Activated CD4-positive, alpha-beta memory T cell treated with anti-CD3 and anti-CD28 coated beads for 36 hours (primary cell): ENCODE measurements at regions of chr7 and their contacts with region 1.

Region 1: DNA sequence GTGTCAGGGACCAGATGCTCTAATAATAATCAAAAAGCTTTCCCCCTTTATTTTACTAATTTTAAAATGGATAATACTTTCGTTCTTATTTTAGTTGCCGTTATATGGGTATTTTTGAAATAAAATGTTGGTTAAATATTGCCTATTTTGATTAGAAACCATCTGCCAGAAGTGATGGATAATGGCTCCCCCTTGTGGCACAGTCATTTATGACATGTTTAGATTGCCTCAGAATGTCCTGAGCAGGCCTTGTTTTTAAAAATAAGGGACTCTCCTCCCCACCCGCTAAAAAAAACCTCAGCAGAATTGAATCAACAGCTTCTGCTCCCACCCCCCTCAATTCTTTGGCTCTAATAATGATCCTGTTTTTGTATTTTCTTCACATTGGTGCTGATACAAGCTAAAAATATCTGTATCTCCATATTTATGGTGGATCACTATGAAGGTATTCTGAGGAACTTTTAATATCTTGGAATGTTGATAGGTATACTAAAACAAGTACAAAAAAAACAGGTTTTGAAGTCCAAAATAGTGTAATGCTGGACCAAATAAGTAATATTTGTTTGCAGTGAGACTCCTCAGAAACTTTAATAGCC is 38.8 kb downstream of the TMEM60 start:
- DNase-seq: peak; percentile 65
- H3K4me3 Mint-ChIP-seq: no peak overlapping the region
- H3K27ac Mint-ChIP-seq: no peak overlapping the region
- H3K4me1 Mint-ChIP-seq: peaks cover 21% of the 10 kb centered on the region
- H3K27me3 Mint-ChIP-seq: no peaks in the 10 kb centered on the region

Region 2: GRCh38 chr7:77651573-77652162 is 107.7 kb before region 1 on chr7:
- CTCF ChIA-PET with region 1: interaction called, 156 read pairs
- POLR2A ChIA-PET with region 1: no interaction called
- intact Hi-C with region 1: no loop called
- DNase-seq: no peak
- H3K4me3 Mint-ChIP-seq: no peak overlapping the region
- H3K27ac Mint-ChIP-seq: no peak overlapping the region
- H3K4me1 Mint-ChIP-seq: no peaks in the 10 kb centered on the region
- H3K27me3 Mint-ChIP-seq: no peaks in the 10 kb centered on the region

Region 3: GRCh38 chr7:77696198-77697028 is 63.0 kb before region 1 on chr7 and contains the start of gene RSBN1L:
- CTCF ChIA-PET with region 1: interaction called, 14 read pairs
- POLR2A ChIA-PET with region 1: interaction called, 5 read pairs
- intact Hi-C with region 1: loop called (anchors 2 kb)
- DNase-seq: peak; percentile 99
- H3K4me3 Mint-ChIP-seq: peak within 1 kb of the TSS; percentile 89
- H3K27ac Mint-ChIP-seq: peak within 1 kb of the TSS; percentile 95
- H3K4me1 Mint-ChIP-seq: peaks cover 51% of the 10 kb centered on the region
- H3K27me3 Mint-ChIP-seq: no peaks in the 10 kb centered on the region
- total RNA-seq, gene RSBN1L: 18.5 to 21.1 TPM

Region 4: DNA sequence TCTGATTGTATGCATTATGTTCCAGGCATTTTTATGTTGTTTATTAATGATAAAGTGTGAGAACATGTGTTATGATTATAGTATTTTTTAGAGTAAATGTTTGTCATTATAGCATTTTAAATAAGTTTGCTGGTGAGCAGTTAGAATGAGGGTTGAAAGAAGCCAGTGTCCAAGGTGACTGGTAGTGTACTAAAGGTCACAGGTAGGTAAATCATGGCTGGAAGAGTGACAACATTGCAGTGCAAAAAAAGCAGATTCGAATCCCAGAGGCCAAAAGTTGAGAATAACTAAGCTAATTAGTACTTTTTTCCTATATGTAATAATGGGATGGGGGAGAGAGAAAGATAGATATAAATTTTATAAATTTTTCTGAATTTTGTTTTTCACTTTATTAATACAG is 19.1 kb before region 1 on chr7:
- CTCF ChIA-PET with region 1: interaction called, 6 read pairs
- POLR2A ChIA-PET with region 1: no interaction called
- intact Hi-C with region 1: loop called (anchors 1 kb)
- DNase-seq: no peak
- H3K4me3 Mint-ChIP-seq: no peak overlapping the region
- H3K27ac Mint-ChIP-seq: no peak overlapping the region
- H3K4me1 Mint-ChIP-seq: peaks cover 5% of the 10 kb centered on the region
- H3K27me3 Mint-ChIP-seq: no peaks in the 10 kb centered on the region